T-cell (primary cell): ENCODE measurements at regions of chr2 and their contacts with region 1.

Region 1: GRCh38 chr2:239380831-239381708 is 19.8 kb downstream of the HDAC4 start:
- DNase-seq: peak in 34 of 35 experiments; percentile 50 to 88 (median 74)
- ATAC-seq: peak; percentile 87 to 93 (median 91)
- H3K4me3 ChIP-seq: peak overlapping the region; percentile 37 to 51
- H3K4me3 Mint-ChIP-seq: peak overlapping the region; percentile 73 to 82 (median 78)
- H3K27ac ChIP-seq: peak overlapping the region; percentile 57
- H3K27ac Mint-ChIP-seq: peak overlapping the region; percentile 81 to 96
- H3K4me1 ChIP-seq: peaks cover 21% of the 10 kb centered on the region in 2 experiments
- H3K4me1 Mint-ChIP-seq: peaks cover 25 to 36% (median 29%) of the 10 kb centered on the region in 3 donors
- H3K27me3 ChIP-seq: no peaks in the 10 kb centered on the region
- H3K27me3 Mint-ChIP-seq: no peaks in the 10 kb centered on the region

Region 2: DNA sequence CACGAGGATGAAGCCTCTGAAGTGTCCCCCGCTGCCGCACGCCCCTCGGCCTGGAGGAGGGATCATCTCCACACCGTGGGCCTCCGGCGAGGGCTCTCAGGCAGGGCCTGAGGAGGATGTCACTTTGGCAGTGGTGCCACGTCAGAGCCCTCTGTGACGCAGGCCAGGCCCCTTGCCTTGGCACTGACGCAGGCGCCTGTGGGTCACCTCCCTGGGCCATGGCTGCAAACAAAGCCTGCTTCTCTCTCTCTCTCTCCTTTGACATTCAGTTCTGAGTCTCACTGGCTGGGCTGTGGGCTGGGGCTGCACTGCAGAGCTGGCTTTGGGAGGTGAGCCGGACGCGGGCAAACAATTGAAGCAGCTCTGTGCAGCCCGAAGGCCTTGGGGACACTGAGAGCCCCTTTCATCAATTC is 259.5 kb before region 1 on chr2:
- CTCF ChIA-PET with region 1: no interaction called
- POLR2A ChIA-PET with region 1: no interaction called
- DNase-seq: no peak
- ATAC-seq: no peak
- H3K4me3 ChIP-seq: no peak overlapping the region
- H3K4me3 Mint-ChIP-seq: peak overlapping the region in 1 of 3 donors; percentile 49
- H3K27ac ChIP-seq: no peak overlapping the region
- H3K27ac Mint-ChIP-seq: no peak overlapping the region
- H3K4me1 ChIP-seq: peaks cover 7 to 36% of the 10 kb centered on the region in 2 experiments
- H3K4me1 Mint-ChIP-seq: peaks cover 15 to 41% (median 27%) of the 10 kb centered on the region in 3 donors
- H3K27me3 ChIP-seq: no peaks in the 10 kb centered on the region
- H3K27me3 Mint-ChIP-seq: no peaks in the 10 kb centered on the region

Region 3: DNA sequence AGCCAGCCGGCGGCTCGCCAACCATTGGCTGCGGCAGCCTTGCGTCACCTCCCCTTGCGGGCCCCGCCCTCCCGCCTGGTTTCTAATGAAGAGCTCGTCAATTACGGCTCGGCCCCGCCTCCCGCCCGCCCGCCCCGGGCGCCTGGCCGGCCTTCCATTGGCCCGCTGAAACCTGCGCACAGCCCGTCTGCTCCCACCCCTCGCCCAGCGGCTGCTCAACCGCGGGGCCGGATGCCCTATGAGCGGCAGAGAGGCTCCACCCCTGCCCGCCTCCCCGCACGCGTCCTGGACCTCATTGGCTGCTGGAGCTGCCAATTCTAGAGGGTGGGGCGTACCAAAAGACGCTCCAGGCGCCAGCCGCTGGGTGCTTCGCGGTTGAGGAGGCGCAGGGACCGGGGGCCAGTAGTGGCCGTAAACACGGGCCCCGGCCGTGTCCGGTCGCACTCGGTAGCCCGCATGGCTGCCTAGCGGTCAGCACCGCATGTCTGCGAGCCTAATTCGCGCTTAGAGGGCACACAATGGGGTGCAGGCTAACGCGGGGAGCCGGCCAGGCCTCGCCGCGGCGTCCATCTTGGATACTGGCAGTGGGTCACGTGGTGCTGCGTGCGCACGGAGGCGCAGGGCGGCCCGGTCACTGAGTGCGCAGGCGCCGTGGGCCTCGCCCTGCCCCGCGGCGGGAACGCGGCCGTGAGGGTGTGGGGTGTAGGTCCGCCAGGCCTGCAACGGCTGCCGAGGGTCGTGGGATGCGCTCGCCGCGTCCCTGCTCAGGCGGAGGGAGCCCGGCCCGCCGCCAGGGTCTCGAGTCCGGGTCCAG is 20.2 kb after region 1 on chr2:
- CTCF ChIA-PET with region 1: interaction called in 1 of 2 experiments, 9 read pairs
- POLR2A ChIA-PET with region 1: interaction called in 1 of 2 experiments, 19 read pairs
- DNase-seq: peak; percentile 97 to 100 (median 99)
- ATAC-seq: peak; percentile 87 to 91 (median 90)
- H3K4me3 ChIP-seq: peak overlapping the region; percentile 90 to 97
- H3K4me3 Mint-ChIP-seq: peak overlapping the region; percentile 90 to 91 (median 90)
- H3K27ac ChIP-seq: peak overlapping the region; percentile 100
- H3K27ac Mint-ChIP-seq: peak overlapping the region; percentile 97 to 99
- H3K4me1 ChIP-seq: peaks cover 10 to 34% of the 10 kb centered on the region in 2 experiments
- H3K4me1 Mint-ChIP-seq: peaks cover 44 to 46% (median 44%) of the 10 kb centered on the region in 3 donors
- H3K27me3 ChIP-seq: no peaks in the 10 kb centered on the region
- H3K27me3 Mint-ChIP-seq: no peaks in the 10 kb centered on the region